ENCODE measurements at regions of chrX and their contacts with region 1.

Region 1: GRCh38 chrX:103533511-103534216 is 14.4 kb upstream of the RAB40A start:
- DNase-seq: peak; percentile 38 to 81 (median 61)
- ATAC-seq: peak; percentile 60
- H3K4me3 ChIP-seq: peak overlapping the region; percentile 20
- H3K4me3 Mint-ChIP-seq: peak overlapping the region; percentile 58
- H3K27ac ChIP-seq: no peak overlapping the region
- H3K27ac Mint-ChIP-seq: no peak overlapping the region
- H3K4me1 ChIP-seq: peaks cover 4% of the 10 kb centered on the region
- H3K4me1 Mint-ChIP-seq: peaks cover 4% of the 10 kb centered on the region
- H3K27me3 ChIP-seq: no peaks in the 10 kb centered on the region
- H3K27me3 Mint-ChIP-seq: no peaks in the 10 kb centered on the region
- CTCF ChIP-seq: peak; percentile 75

Region 2: GRCh38 chrX:103711533-103712369 is 178.1 kb after region 1 on chrX:
- CTCF ChIA-PET with region 1: no interaction called
- POLR2A ChIA-PET with region 1: no interaction called
- intact Hi-C with region 1: loop called in 1 of 2 experiments (anchors 10 kb)
- DNase-seq: peak; percentile 2 to 67 (median 22)
- ATAC-seq: peak; percentile 62
- H3K4me3 ChIP-seq: no peak overlapping the region
- H3K4me3 Mint-ChIP-seq: no peak overlapping the region
- H3K27ac ChIP-seq: no peak overlapping the region
- H3K27ac Mint-ChIP-seq: no peak overlapping the region
- H3K4me1 ChIP-seq: no peaks in the 10 kb centered on the region
- H3K4me1 Mint-ChIP-seq: no peaks in the 10 kb centered on the region
- H3K27me3 ChIP-seq: no peaks in the 10 kb centered on the region
- H3K27me3 Mint-ChIP-seq: no peaks in the 10 kb centered on the region
- CTCF ChIP-seq: peak; percentile 43

Region 3: GRCh38 chrX:103817502-103817901 is 283.8 kb after region 1 on chrX:
- CTCF ChIA-PET with region 1: no interaction called
- POLR2A ChIA-PET with region 1: no interaction called
- intact Hi-C with region 1: loop called (anchors 1 kb)
- DNase-seq: peak in 5 of 14 experiments; percentile 9 to 73 (median 59)
- ATAC-seq: peak; percentile 55
- H3K4me3 ChIP-seq: no peak overlapping the region
- H3K4me3 Mint-ChIP-seq: no peak overlapping the region
- H3K27ac ChIP-seq: no peak overlapping the region
- H3K27ac Mint-ChIP-seq: no peak overlapping the region
- H3K4me1 ChIP-seq: no peaks in the 10 kb centered on the region
- H3K4me1 Mint-ChIP-seq: no peaks in the 10 kb centered on the region
- H3K27me3 ChIP-seq: no peaks in the 10 kb centered on the region
- H3K27me3 Mint-ChIP-seq: peaks cover 14% of the 10 kb centered on the region
- CTCF ChIP-seq: peak; percentile 60

Measured in CD4-positive, alpha-beta T cell (primary cell).